Mammary epithelial cell (primary cell): ENCODE measurements at regions of chr18 and their contacts with region 1.

Region 1: GRCh38 chr18:62672600-62672999 is 42.7 kb upstream of the PHLPP1 start:
- DNase-seq: no peak
- H3K4me3 ChIP-seq: no peak overlapping the region
- H3K27ac ChIP-seq: no peak overlapping the region
- H3K4me1 ChIP-seq: peaks cover 9% of the 10 kb centered on the region
- H3K27me3 ChIP-seq: no peaks in the 10 kb centered on the region
- CTCF ChIP-seq: no peak

Region 2: GRCh38 chr18:62545098-62545497 is 127.5 kb before region 1 on chr18:
- CTCF ChIA-PET with region 1: no interaction called
- dilution Hi-C with region 1: no loop called
- in situ Hi-C with region 1: no loop called
- intact Hi-C with region 1: no loop called
- DNase-seq: no peak
- H3K4me3 ChIP-seq: no peak overlapping the region
- H3K27ac ChIP-seq: no peak overlapping the region
- H3K4me1 ChIP-seq: no peaks in the 10 kb centered on the region
- H3K27me3 ChIP-seq: no peaks in the 10 kb centered on the region
- CTCF ChIP-seq: no peak

Region 3: DNA sequence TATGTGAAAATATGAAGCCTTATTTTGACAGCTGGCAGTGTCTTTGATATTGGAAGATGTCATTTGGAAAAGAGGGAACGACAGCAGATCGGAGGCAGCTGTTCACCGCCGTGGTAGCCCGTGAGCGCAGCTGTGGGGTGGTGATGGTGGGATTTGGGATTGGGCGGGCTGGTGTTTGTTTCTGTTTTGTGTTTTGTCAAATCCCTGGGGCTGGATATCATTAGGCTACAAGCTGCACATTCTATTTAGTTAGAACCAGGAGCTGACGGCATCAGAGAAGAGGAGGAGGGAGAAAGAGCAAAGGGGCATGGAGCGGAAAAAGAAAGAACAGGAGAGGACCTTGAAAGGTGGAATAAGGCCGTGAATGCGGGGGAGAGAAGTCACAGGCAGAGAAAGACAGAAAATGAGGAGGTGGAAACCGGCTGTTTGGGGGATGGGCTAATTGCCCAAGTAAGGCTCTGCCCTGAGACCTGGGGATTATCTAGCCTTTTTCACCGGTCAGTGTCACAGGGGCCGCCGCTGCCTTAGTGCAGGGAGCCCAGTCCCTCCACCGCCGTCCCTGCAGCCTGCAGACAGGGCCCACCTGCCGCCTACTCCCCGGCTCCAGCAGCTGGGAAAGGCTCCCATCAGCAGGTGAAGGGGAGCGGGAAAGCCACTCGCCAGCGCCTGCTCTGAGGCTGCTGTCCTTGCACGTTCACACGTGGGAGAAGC is 61.7 kb before region 1 on chr18:
- CTCF ChIA-PET with region 1: no interaction called
- dilution Hi-C with region 1: no loop called
- in situ Hi-C with region 1: no loop called
- intact Hi-C with region 1: loop called (anchors 5 kb)
- DNase-seq: no peak
- H3K4me3 ChIP-seq: no peak overlapping the region
- H3K27ac ChIP-seq: no peak overlapping the region
- H3K4me1 ChIP-seq: no peaks in the 10 kb centered on the region
- H3K27me3 ChIP-seq: peaks cover 2% of the 10 kb centered on the region
- CTCF ChIP-seq: no peak